ENCODE measurements at regions of chr2 and their contacts with region 1.

Region 1: GRCh38 chr2:96174251-96175144 is 29.3 kb upstream of the DUSP2 start:
- DNase-seq: no peak
- ATAC-seq: peak; percentile 97
- H3K4me3 ChIP-seq: no peak overlapping the region
- H3K27ac ChIP-seq: no peak overlapping the region
- H3K4me1 ChIP-seq: peaks cover 6% of the 10 kb centered on the region; the same call in 1 of the 2 replicates
- H3K27me3 ChIP-seq: no peaks in the 10 kb centered on the region
- CTCF ChIP-seq: peak; percentile 94 to 97 (median 96)
- EP300 ChIP-seq: no peak; a peak in 1 of 4 replicates
- POLR2A ChIP-seq: no peak
- RAD21 ChIP-seq: peak; percentile 100

Region 2: GRCh38 chr2:95022309-95023221 is 1151.9 kb before region 1 on chr2:
- CTCF ChIA-PET with region 1: no interaction called
- POLR2A ChIA-PET with region 1: no interaction called
- RAD21 ChIA-PET with region 1: no interaction called
- SMC1A ChIA-PET with region 1: no interaction called
- in situ Hi-C with region 1: no loop called
- intact Hi-C with region 1: no loop called
- DNase-seq: peak; percentile 69
- ATAC-seq: peak; percentile 88
- H3K4me3 ChIP-seq: no peak overlapping the region
- H3K27ac ChIP-seq: no peak overlapping the region
- H3K4me1 ChIP-seq: peaks cover 6% of the 10 kb centered on the region
- H3K27me3 ChIP-seq: peaks cover 0 to 2% of the 10 kb centered on the region in 2 experiments; a peak in 3 of 4 replicates
- CTCF ChIP-seq: peak; percentile 97 to 99 (median 99); a peak in 5 of 6 replicates
- EP300 ChIP-seq: no peak
- POLR2A ChIP-seq: no peak
- RAD21 ChIP-seq: peak; percentile 93

Region 3: GRCh38 chr2:96024336-96025193 is 149.9 kb before region 1 on chr2:
- CTCF ChIA-PET with region 1: interaction called, 39 read pairs
- POLR2A ChIA-PET with region 1: no interaction called
- RAD21 ChIA-PET with region 1: interaction called, 18 read pairs
- SMC1A ChIA-PET with region 1: interaction called, 3 read pairs
- in situ Hi-C with region 1: no loop called
- intact Hi-C with region 1: no loop called
- DNase-seq: no peak
- ATAC-seq: no peak
- H3K4me3 ChIP-seq: no peak overlapping the region
- H3K27ac ChIP-seq: no peak overlapping the region
- H3K4me1 ChIP-seq: no peaks in the 10 kb centered on the region
- H3K27me3 ChIP-seq: no peaks in the 10 kb centered on the region
- CTCF ChIP-seq: no peak
- EP300 ChIP-seq: no peak
- POLR2A ChIP-seq: no peak
- RAD21 ChIP-seq: no peak

Region 4: GRCh38 chr2:96131152-96131812 is 43.2 kb before region 1 on chr2:
- CTCF ChIA-PET with region 1: interaction called, 535 read pairs
- POLR2A ChIA-PET with region 1: interaction called, 31 read pairs
- RAD21 ChIA-PET with region 1: interaction called, 463 read pairs
- SMC1A ChIA-PET with region 1: interaction called, 338 read pairs
- in situ Hi-C with region 1: no loop called
- intact Hi-C with region 1: no loop called
- DNase-seq: no peak
- ATAC-seq: peak; percentile 11; the same call in 2 of the 3 replicates
- H3K4me3 ChIP-seq: no peak overlapping the region
- H3K27ac ChIP-seq: no peak overlapping the region
- H3K4me1 ChIP-seq: peaks cover 10% of the 10 kb centered on the region
- H3K27me3 ChIP-seq: no peaks in the 10 kb centered on the region
- CTCF ChIP-seq: no peak
- EP300 ChIP-seq: no peak
- POLR2A ChIP-seq: no peak
- RAD21 ChIP-seq: no peak

Region 5: GRCh38 chr2:96145036-96145847 is 29.3 kb before region 1 on chr2 and contains the start of gene DUSP2:
- CTCF ChIA-PET with region 1: interaction called, 535 read pairs
- POLR2A ChIA-PET with region 1: interaction called, 35 read pairs
- RAD21 ChIA-PET with region 1: interaction called, 463 read pairs
- SMC1A ChIA-PET with region 1: interaction called, 338 read pairs
- in situ Hi-C with region 1: loop called (anchors 5 kb)
- intact Hi-C with region 1: no loop called
- DNase-seq: peak; percentile 85
- ATAC-seq: peak; percentile 62
- H3K4me3 ChIP-seq: peak within 1 kb of the TSS; percentile 92
- H3K27ac ChIP-seq: peak within 1 kb of the TSS; percentile 89
- H3K4me1 ChIP-seq: peaks cover 45% of the 10 kb centered on the region
- H3K27me3 ChIP-seq: no peaks in the 10 kb centered on the region
- CTCF ChIP-seq: no peak
- EP300 ChIP-seq: peak in 1 of 2 experiments; percentile 36; a peak in 3 of 4 replicates
- POLR2A ChIP-seq: no peak
- RAD21 ChIP-seq: 0 out of 2 replicates have a peak, but pooled peaks have one; percentile 22
- polyA plus RNA-seq, gene DUSP2: 9.7 to 34.6 TPM

Region 6: DNA sequence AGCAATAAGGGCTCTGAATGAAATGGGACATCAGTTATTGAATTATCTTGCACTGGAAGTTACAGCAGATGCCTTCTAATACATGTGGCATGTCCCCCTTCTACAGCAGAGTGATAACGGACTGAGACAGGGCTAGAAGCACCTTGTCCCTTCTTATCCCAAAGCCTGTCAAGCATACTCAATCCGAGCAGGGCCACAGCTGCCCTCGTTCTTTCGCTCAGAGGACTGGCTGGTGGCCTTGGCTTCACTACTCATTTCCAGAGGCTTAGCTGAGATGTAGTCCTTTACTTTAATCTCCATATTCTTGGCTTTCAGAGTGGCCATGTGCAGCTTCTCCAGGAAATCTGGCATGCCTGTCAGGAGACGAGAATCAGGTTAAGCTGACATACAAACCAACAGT is 12.1 kb after region 1 on chr2:
- CTCF ChIA-PET with region 1: interaction called, 15 read pairs
- POLR2A ChIA-PET with region 1: interaction called, 4 read pairs
- RAD21 ChIA-PET with region 1: interaction called, 4 read pairs
- SMC1A ChIA-PET with region 1: interaction called, 6 read pairs
- in situ Hi-C with region 1: no loop called
- intact Hi-C with region 1: no loop called
- DNase-seq: no peak
- ATAC-seq: no peak
- H3K4me3 ChIP-seq: no peak overlapping the region
- H3K27ac ChIP-seq: no peak overlapping the region
- H3K4me1 ChIP-seq: peaks cover 2% of the 10 kb centered on the region; the same call in 1 of the 2 replicates
- H3K27me3 ChIP-seq: no peaks in the 10 kb centered on the region
- CTCF ChIP-seq: no peak
- EP300 ChIP-seq: no peak
- POLR2A ChIP-seq: no peak
- RAD21 ChIP-seq: no peak

Region 7: DNA sequence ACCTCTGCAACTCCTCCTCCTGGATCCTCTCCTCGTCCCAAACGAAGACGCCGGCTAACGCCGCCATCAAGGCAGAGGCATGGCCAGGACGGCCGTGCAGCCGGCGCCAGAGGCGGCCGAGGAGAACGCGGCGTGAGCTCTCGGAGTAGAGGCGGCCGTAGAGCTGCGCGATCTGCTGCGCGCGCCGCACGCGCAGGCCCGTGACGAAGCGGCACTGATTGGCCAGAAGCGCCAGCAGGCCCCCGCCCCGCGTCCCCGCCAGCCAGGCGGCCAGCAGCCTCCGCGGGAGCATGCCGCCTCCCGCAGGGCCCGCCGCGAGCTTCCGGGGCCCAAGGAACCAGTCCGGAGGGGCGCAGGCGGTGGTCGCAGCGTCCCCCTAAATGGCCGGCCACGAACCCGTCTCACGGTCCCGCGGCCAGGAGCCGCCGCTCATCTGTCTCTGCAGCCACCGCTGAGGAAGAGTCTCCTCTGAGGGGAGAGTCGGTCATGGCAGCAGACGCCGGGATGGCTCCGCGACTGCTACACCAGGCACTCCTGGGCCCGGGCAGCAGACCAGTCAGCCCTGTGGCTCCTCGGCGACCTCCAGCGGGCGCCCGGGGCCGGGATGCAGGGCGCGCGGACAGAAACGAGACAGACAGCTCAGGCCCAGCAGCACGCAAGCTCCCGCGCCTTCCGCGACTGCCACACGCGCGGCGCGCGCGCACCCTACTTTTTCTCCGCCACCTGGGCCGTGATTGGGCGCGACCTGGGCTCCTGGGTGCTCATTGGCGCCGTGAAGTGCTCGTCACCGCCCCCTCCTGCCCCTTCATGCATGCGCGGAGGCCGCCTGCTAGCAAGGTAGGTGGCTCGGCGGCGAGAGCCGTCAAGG is 33.9 kb after region 1 on chr2 and contains the start of gene STARD7:
- CTCF ChIA-PET with region 1: interaction called, 36 read pairs
- POLR2A ChIA-PET with region 1: interaction called, 8 read pairs
- RAD21 ChIA-PET with region 1: interaction called, 32 read pairs
- SMC1A ChIA-PET with region 1: interaction called, 29 read pairs
- in situ Hi-C with region 1: no loop called
- intact Hi-C with region 1: no loop called
- DNase-seq: peak; percentile 92
- ATAC-seq: peak; percentile 94
- H3K4me3 ChIP-seq: peak within 1 kb of the TSS; percentile 94
- H3K27ac ChIP-seq: peak within 1 kb of the TSS; percentile 92
- H3K4me1 ChIP-seq: peaks cover 27% of the 10 kb centered on the region
- H3K27me3 ChIP-seq: no peaks in the 10 kb centered on the region
- CTCF ChIP-seq: no peak; a peak in 1 of 6 replicates
- EP300 ChIP-seq: no peak
- POLR2A ChIP-seq: peak; percentile 91
- RAD21 ChIP-seq: no peak
- polyA plus RNA-seq, gene STARD7: 85.4 to 114 TPM

Region 8: DNA sequence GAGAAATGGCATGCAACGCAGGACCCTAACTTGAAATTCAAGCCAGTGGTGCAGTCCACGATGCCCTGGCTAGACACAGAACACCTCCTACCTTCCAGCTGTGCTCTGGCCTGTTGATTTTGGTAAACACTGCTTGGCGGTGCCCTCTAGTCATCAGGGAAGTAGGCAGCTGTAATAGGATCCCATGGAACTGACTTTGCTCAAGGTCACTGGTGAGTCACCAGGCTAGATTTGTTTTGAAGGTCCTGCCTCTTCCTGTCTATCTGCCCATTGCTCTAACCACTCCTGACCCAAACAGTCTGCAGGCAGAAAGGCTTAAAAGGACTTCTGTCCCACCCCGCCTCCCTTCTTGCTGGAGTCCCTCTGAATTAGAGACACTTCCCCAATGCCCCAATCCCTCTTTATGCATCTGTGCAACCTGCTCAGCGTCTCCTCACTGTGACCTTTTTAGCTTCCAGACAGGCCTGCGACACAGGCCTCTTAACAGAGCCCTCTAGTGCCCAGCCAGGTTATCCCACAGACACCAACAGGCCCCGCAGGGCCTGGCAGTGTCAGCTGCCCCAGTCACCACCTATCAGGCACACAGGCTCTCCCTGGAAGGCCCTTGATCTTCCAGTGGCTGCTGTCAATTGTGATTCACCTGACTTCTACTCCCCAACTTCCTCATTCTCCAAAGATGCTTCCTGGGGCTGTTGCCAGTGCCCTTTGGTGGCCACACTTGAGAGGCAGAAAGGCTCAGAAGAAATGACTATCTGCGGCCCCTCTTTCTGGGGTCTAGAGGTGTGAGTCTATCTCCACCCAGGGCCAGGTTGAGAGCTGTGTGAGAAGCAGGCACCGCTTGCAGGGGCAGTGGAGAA is 86.1 kb after region 1 on chr2:
- CTCF ChIA-PET with region 1: interaction called, 20 read pairs
- POLR2A ChIA-PET with region 1: interaction called, 3 read pairs
- RAD21 ChIA-PET with region 1: interaction called, 10 read pairs
- SMC1A ChIA-PET with region 1: interaction called, 22 read pairs
- in situ Hi-C with region 1: no loop called
- intact Hi-C with region 1: no loop called
- DNase-seq: no peak
- ATAC-seq: peak; percentile 78
- H3K4me3 ChIP-seq: no peak overlapping the region
- H3K27ac ChIP-seq: peak overlapping the region; percentile 45
- H3K4me1 ChIP-seq: peaks cover 32% of the 10 kb centered on the region
- H3K27me3 ChIP-seq: no peaks in the 10 kb centered on the region
- CTCF ChIP-seq: peak; percentile 60 to 74 (median 72)
- EP300 ChIP-seq: no peak
- POLR2A ChIP-seq: no peak
- RAD21 ChIP-seq: peak; percentile 39; the same call in 1 of the 2 replicates